Calu3 (cell line): ENCODE measurements at regions of chr11 and their contacts with region 1.

Region 1: DNA sequence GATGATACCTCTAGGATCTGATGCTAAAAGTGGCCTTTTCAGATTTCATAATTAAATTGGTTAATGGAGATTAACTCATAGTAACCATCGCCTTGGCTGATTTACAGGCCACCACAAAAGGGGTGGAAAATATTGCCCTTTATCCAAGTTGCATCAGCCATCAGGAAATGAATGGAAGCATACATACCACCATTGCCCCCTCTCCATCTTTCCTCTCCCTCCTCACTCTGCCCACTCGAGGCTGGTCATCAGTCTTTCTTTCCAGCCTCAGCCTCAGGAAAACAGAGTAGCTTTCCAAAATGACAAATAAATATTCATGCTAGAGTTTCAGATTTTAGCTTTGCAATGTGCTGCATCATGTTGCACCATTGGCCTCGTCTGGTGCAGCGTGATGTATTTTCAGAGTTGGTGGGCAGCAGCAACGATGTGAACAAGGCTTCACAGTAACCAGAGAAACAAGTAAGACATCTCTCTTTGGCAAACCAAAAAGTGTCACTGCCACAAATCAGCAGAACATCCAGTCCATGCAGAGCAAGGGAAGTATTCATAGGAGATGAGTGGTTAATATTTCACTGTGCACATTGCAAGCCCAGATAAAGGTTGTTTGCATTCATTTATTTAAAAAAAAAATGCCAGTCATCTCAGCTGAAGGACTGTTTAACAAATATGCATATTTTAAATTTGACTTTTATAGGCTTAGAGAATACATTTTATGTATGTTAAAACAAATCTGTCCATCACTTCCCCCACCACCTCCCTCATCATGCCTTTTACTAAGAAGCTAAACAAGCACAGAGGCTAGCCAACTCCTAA is 136.7 kb upstream of the FAT3 start:
- DNase-seq: no peak
- H3K4me3 Mint-ChIP-seq: no peak overlapping the region
- H3K27ac Mint-ChIP-seq: no peak overlapping the region
- H3K4me1 Mint-ChIP-seq: peaks cover 18% of the 10 kb centered on the region
- H3K27me3 Mint-ChIP-seq: no peaks in the 10 kb centered on the region
- CTCF ChIP-seq: no peak

Region 2: GRCh38 chr11:92071660-92072059 is 16.3 kb before region 1 on chr11:
- CTCF ChIA-PET with region 1: no interaction called
- intact Hi-C with region 1: loop called (anchors 1 kb)
- DNase-seq: no peak
- H3K4me3 Mint-ChIP-seq: no peak overlapping the region
- H3K27ac Mint-ChIP-seq: no peak overlapping the region
- H3K4me1 Mint-ChIP-seq: no peaks in the 10 kb centered on the region
- H3K27me3 Mint-ChIP-seq: no peaks in the 10 kb centered on the region
- CTCF ChIP-seq: no peak